MCF 10A (cell line): ENCODE measurements at regions of chr4 and their contacts with region 1.

Region 1: GRCh38 chr4:12409507-12410190 is 981.0 kb upstream of the HS3ST1 start:
- DNase-seq: peak; percentile 79
- H3K4me3 Mint-ChIP-seq: no peak overlapping the region
- H3K27ac Mint-ChIP-seq: no peak overlapping the region
- H3K4me1 Mint-ChIP-seq: peaks cover 19% of the 10 kb centered on the region
- H3K27me3 Mint-ChIP-seq: no peaks in the 10 kb centered on the region
- CTCF ChIP-seq: peak; percentile 44

Region 2: DNA sequence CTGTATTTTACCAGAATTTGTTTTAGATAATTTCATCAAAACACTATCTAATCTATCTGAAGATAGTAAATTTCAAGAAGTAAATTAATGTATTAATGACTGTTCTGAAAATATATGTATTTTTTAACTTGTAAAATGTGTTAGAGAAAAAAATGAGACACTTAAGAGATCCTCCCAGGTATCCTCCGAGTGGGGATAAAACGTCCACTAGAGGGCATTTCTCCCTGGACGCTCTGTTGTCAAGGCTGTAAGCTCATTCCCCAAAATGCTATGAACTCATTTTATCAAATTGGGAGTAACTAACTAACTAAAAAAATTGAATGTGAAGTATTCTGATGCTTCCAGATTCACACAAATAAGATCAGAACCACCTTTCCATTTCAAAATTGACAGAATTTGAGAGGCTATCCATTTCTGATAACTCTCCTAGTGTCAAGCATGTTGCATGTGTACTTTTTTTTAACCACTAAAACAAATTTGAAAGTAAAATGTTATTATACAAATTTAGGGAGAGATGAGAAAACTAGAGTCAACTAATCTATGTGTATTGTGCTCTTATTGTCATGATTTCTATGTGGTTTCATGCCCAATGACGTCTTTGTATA is 643.7 kb before region 1 on chr4:
- CTCF ChIA-PET with region 1: interaction called, 15 read pairs
- POLR2A ChIA-PET with region 1: no interaction called
- intact Hi-C with region 1: loop called (anchors 1 kb)
- DNase-seq: peak; percentile 59
- H3K4me3 Mint-ChIP-seq: no peak overlapping the region
- H3K27ac Mint-ChIP-seq: no peak overlapping the region
- H3K4me1 Mint-ChIP-seq: no peaks in the 10 kb centered on the region
- H3K27me3 Mint-ChIP-seq: no peaks in the 10 kb centered on the region
- CTCF ChIP-seq: peak; percentile 65

Region 3: GRCh38 chr4:11805842-11806241 is 603.8 kb before region 1 on chr4:
- CTCF ChIA-PET with region 1: interaction called, 24 read pairs
- POLR2A ChIA-PET with region 1: interaction called, 4 read pairs
- intact Hi-C with region 1: loop called (anchors 1 kb)
- DNase-seq: peak; percentile 61
- H3K4me3 Mint-ChIP-seq: no peak overlapping the region
- H3K27ac Mint-ChIP-seq: no peak overlapping the region
- H3K4me1 Mint-ChIP-seq: no peaks in the 10 kb centered on the region
- H3K27me3 Mint-ChIP-seq: no peaks in the 10 kb centered on the region
- CTCF ChIP-seq: peak; percentile 64

Region 4: DNA sequence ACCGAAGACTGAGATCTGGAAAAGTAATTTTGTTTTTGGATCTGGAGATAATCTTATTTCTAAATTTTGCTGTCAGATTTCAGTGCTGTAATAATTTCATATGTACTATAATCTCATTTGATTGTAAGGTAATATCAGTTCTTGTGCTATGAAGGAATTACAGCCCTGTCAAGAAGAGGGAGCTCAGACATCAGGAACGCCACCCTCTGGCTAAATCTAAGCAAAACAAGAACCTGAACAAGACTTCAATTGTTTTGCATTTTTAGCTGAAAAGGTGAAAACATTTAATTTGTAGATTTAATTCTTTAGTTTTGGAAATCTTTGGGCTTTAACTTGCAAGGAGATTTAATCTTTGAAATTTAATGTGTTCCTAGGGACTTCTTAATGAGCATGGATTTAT is 455.6 kb before region 1 on chr4:
- CTCF ChIA-PET with region 1: interaction called, 6 read pairs
- POLR2A ChIA-PET with region 1: no interaction called
- intact Hi-C with region 1: loop called (anchors 2 kb)
- DNase-seq: peak; percentile 52
- H3K4me3 Mint-ChIP-seq: no peak overlapping the region
- H3K27ac Mint-ChIP-seq: no peak overlapping the region
- H3K4me1 Mint-ChIP-seq: no peaks in the 10 kb centered on the region
- H3K27me3 Mint-ChIP-seq: no peaks in the 10 kb centered on the region
- CTCF ChIP-seq: peak; percentile 36

Region 5: GRCh38 chr4:12041828-12042227 is 367.8 kb before region 1 on chr4:
- CTCF ChIA-PET with region 1: interaction called, 9 read pairs
- POLR2A ChIA-PET with region 1: no interaction called
- intact Hi-C with region 1: loop called (anchors 1 kb)
- DNase-seq: peak; percentile 23
- H3K4me3 Mint-ChIP-seq: no peak overlapping the region
- H3K27ac Mint-ChIP-seq: no peak overlapping the region
- H3K4me1 Mint-ChIP-seq: no peaks in the 10 kb centered on the region
- H3K27me3 Mint-ChIP-seq: no peaks in the 10 kb centered on the region
- CTCF ChIP-seq: no peak

Region 6: GRCh38 chr4:12393631-12394262 is 15.9 kb before region 1 on chr4:
- CTCF ChIA-PET with region 1: interaction called, 11 read pairs
- POLR2A ChIA-PET with region 1: interaction called, 3 read pairs
- intact Hi-C with region 1: no loop called
- DNase-seq: peak; percentile 3
- H3K4me3 Mint-ChIP-seq: no peak overlapping the region
- H3K27ac Mint-ChIP-seq: no peak overlapping the region
- H3K4me1 Mint-ChIP-seq: no peaks in the 10 kb centered on the region
- H3K27me3 Mint-ChIP-seq: no peaks in the 10 kb centered on the region
- CTCF ChIP-seq: no peak

Region 7: DNA sequence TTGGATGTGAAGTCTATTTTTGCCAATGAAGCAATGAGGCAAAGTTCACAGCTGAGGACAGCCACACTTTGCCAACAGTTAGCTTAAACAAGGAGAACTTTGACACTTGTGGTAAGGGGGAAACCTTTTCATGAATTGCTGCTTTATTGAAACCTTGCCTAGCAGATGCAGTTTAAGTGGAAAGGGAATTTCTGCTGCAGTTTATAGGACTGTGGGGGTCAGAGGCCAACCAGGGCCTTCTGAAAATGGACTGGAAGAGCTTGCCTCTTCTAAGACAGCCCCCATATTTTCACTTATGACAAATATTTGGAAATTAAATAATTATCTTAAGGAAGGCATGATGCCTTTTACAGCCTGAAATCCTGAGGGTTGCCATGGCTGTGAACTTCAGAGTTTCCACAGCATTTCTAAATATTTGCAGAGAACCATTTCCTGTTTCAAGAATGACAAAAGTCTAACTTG is 524.1 kb after region 1 on chr4:
- CTCF ChIA-PET with region 1: no interaction called
- POLR2A ChIA-PET with region 1: no interaction called
- intact Hi-C with region 1: no loop called
- DNase-seq: no peak
- H3K4me3 Mint-ChIP-seq: no peak overlapping the region
- H3K27ac Mint-ChIP-seq: no peak overlapping the region
- H3K4me1 Mint-ChIP-seq: no peaks in the 10 kb centered on the region
- H3K27me3 Mint-ChIP-seq: no peaks in the 10 kb centered on the region
- CTCF ChIP-seq: no peak